ENCODE measurements at regions of chr4 and their contacts with region 1.

Region 1: DNA sequence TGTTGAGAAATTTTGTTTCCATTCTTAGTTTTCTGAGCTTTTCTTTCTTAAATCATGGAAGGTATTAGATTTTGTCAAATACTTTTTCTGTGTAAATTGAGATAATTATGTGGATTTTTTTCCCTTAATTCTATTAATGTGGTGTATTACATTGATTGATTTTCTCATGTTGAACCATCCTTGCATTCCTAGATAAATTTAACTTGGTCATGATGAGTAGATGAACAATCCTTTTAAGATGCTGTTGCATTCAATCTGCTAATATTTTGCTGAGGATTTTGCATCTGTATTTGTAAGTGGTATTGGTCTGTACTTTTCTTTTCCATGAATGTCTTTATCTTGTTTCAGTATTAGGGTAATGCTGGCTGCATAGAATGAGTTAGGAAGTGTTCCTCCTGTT is 20.3 kb upstream of the CTBP1 start:
- DNase-seq: no peak
- H3K4me3 ChIP-seq: no peak overlapping the region
- H3K27ac ChIP-seq: no peak overlapping the region
- H3K4me1 ChIP-seq: no peaks in the 10 kb centered on the region
- H3K27me3 ChIP-seq: no peaks in the 10 kb centered on the region
- CTCF ChIP-seq: no peak

Region 2: DNA sequence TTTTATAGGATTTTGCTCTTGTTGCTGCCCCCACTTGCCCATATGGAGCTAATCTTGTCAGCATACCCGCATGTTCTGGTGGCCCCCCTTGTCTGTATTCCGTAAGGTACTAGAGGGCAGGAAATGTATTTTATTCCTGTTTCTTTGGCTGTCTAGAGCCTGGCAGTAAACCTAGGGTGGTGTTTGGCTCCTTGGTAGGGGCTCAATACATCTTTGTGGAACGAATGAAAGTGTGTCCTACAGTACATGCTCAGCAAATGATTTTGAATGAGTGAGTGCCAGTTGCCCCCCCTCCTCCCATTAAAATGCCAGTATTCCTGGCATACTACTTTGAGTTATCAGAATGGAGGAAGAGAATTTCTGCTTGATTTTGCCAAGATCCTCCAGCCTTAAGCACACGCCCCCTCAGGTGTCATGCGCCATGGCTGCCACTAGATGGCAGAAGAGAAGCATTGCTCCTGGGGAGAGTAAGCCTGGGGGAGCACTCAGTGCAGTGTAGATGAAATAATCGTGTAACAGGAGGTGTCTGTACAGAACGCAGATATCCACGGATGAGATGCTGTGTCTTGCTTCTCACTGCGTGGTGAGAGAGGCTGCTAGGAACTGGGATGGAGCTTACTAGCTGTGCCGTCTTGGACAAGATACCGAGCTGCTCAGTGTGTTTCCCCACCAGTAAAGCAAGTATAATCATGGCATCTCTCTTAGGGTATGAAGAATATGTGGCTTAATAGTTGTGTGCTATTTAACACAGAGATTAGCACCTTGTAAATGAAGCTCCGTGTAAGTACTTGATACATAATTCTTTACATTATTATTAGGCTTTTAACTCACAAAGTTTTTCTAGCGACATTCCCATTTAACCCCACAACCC is 138.7 kb before region 1 on chr4:
- intact Hi-C with region 1: loop called (anchors 2 kb)
- DNase-seq: peak in 1 of 2 donors; percentile 79
- H3K4me3 ChIP-seq: no peak overlapping the region
- H3K27ac ChIP-seq: no peak overlapping the region
- H3K4me1 ChIP-seq: no peaks in the 10 kb centered on the region
- H3K27me3 ChIP-seq: no peaks in the 10 kb centered on the region
- CTCF ChIP-seq: peak; percentile 92 to 100 (median 98)